HEK293 (cell line): ENCODE measurements at regions of chr19 and their contacts with region 1.

Region 1: GRCh38 chr19:14347999-14348889 is 33.0 kb upstream of the ADGRE5 start:
- H3K4me3 ChIP-seq: peak overlapping the region; percentile 33
- H3K27ac ChIP-seq: no peak overlapping the region
- H3K4me1 ChIP-seq: no peaks in the 10 kb centered on the region
- CTCF ChIP-seq: peak; percentile 89

Region 2: GRCh38 chr19:14147797-14148605 is 200.2 kb before region 1 on chr19:
- CTCF ChIA-PET with region 1: interaction called, 17 read pairs
- POLR2A ChIA-PET with region 1: interaction called, 3 read pairs
- H3K4me3 ChIP-seq: no peak overlapping the region
- H3K27ac ChIP-seq: no peak overlapping the region
- H3K4me1 ChIP-seq: no peaks in the 10 kb centered on the region
- CTCF ChIP-seq: peak; percentile 66

Region 3: GRCh38 chr19:14218620-14219330 is 129.5 kb before region 1 on chr19:
- CTCF ChIA-PET with region 1: interaction called, 16 read pairs
- POLR2A ChIA-PET with region 1: no interaction called
- H3K4me3 ChIP-seq: no peak overlapping the region
- H3K27ac ChIP-seq: no peak overlapping the region
- H3K4me1 ChIP-seq: no peaks in the 10 kb centered on the region
- CTCF ChIP-seq: no peak

Region 4: DNA sequence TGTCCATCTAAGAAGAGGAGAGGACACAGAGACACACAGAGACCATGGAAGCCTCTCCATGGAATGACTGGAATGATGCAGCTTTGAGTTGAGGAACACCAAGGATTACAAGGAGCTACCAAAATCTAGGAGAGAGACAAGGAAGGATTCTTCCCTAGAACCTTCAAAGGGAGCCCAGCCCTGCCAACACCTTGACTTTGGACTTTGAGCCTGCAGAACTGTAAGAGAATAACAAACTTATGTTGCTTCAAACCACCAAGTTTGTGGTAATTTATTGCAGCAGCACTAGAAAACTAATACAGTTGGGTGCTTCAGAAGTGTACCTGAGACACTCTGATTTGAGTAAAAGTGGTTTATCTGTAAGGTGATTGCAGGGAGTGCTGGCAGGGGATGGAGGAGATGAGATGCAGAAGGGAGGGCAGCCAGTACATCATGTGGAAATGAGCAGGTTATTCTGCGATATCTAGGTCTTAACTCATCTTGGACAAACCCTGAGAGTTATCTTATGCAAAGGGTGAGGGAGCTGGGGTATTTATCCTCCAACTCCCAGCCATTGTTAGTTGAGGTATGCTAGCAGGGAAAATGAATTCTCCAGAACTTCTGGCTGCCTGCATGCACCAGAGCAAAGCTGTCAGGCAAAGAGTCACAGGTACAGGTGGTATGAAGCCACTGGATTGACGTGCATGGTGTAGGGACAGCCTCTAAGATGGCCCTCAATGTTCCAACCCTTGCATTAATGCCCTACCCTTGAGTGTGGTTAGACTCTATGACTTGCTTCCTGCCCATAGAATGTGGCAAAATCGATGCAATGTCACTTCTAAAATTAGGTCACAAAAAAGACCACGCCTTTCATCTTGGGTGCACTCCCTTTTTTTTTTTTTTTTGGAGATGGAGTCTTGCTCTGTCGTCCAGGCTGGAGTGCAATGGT is 111.0 kb before region 1 on chr19:
- CTCF ChIA-PET with region 1: no interaction called
- POLR2A ChIA-PET with region 1: no interaction called
- H3K4me3 ChIP-seq: no peak overlapping the region
- H3K27ac ChIP-seq: no peak overlapping the region
- H3K4me1 ChIP-seq: no peaks in the 10 kb centered on the region
- CTCF ChIP-seq: no peak

Region 5: GRCh38 chr19:14366498-14366915 is 18.3 kb after region 1 on chr19:
- CTCF ChIA-PET with region 1: interaction called, 11 read pairs
- POLR2A ChIA-PET with region 1: interaction called, 4 read pairs
- H3K4me3 ChIP-seq: no peak overlapping the region
- H3K27ac ChIP-seq: no peak overlapping the region
- H3K4me1 ChIP-seq: peaks cover 3% of the 10 kb centered on the region; the same call in 1 of the 2 replicates
- CTCF ChIP-seq: no peak

Region 6: GRCh38 chr19:14405758-14406644 is 57.8 kb after region 1 on chr19:
- CTCF ChIA-PET with region 1: interaction called, 13 read pairs
- POLR2A ChIA-PET with region 1: interaction called, 3 read pairs
- H3K4me3 ChIP-seq: no peak overlapping the region
- H3K27ac ChIP-seq: peak overlapping the region; percentile 50; the same call in 1 of the 2 replicates
- H3K4me1 ChIP-seq: no peaks in the 10 kb centered on the region
- CTCF ChIP-seq: peak; percentile 95

Region 7: DNA sequence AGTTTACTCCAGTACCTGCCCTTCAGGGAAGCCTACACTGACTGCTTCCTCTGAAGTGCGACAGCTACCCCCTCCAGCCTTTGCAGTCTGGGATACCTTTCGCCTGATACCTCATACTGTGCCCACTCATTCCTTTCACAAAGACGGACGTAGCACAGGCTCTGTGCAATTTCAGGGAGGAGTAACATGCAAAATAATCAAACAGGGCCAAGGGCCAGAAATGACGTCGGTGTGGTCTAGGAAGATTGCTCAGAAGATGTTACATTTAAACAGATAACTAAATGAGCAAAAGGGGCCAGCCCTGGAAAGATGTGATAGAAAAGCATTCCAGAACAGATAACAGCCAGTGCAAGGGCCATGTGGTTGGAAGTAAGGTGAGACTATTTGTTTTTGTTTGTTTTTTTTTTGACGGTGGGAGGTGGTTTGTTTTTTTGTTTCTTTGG is 77.5 kb after region 1 on chr19:
- CTCF ChIA-PET with region 1: no interaction called
- POLR2A ChIA-PET with region 1: no interaction called
- H3K4me3 ChIP-seq: no peak overlapping the region
- H3K27ac ChIP-seq: no peak overlapping the region
- H3K4me1 ChIP-seq: no peaks in the 10 kb centered on the region
- CTCF ChIP-seq: no peak

Region 8: GRCh38 chr19:14439014-14439413 is 90.8 kb after region 1 on chr19:
- CTCF ChIA-PET with region 1: no interaction called
- POLR2A ChIA-PET with region 1: no interaction called
- H3K4me3 ChIP-seq: no peak overlapping the region
- H3K27ac ChIP-seq: no peak overlapping the region
- H3K4me1 ChIP-seq: 0 out of 2 replicates have a peak, but pooled peaks cover 3% of the 10 kb centered on the region
- CTCF ChIP-seq: no peak

Region 9: GRCh38 chr19:14699641-14700040 is 351.4 kb after region 1 on chr19:
- CTCF ChIA-PET with region 1: no interaction called
- POLR2A ChIA-PET with region 1: no interaction called
- H3K4me3 ChIP-seq: no peak overlapping the region
- H3K27ac ChIP-seq: no peak overlapping the region
- H3K4me1 ChIP-seq: no peaks in the 10 kb centered on the region
- CTCF ChIP-seq: no peak